Sigmoid colon (tissue), 7 donors: ENCODE measurements at regions of chr17 and their contacts with region 1.

Region 1: GRCh38 chr17:73657473-73658116 is 13.3 kb upstream of the SDK2 start:
- DNase-seq: no peak
- H3K4me3 ChIP-seq: no peak overlapping the region
- H3K27ac ChIP-seq: no peak overlapping the region
- H3K4me1 ChIP-seq: no peaks in the 10 kb centered on the region
- H3K27me3 ChIP-seq: peaks cover 0 to 3% (median 0%) of the 10 kb centered on the region in 3 donors
- CTCF ChIP-seq: peak in 3 of 4 experiments; percentile 28 to 37 (median 31)
- EP300 ChIP-seq: no peak
- POLR2A ChIP-seq: no peak

Region 2: GRCh38 chr17:73393962-73394361 is 263.6 kb before region 1 on chr17:
- intact Hi-C with region 1: no loop called
- DNase-seq: no peak
- H3K4me3 ChIP-seq: no peak overlapping the region
- H3K27ac ChIP-seq: no peak overlapping the region
- H3K4me1 ChIP-seq: no peaks in the 10 kb centered on the region
- H3K27me3 ChIP-seq: no peaks in the 10 kb centered on the region
- CTCF ChIP-seq: no peak
- EP300 ChIP-seq: no peak
- POLR2A ChIP-seq: no peak

Region 3: GRCh38 chr17:73710095-73710592 is 52.5 kb after region 1 on chr17:
- intact Hi-C with region 1: loop called (anchors 2 kb)
- DNase-seq: no peak
- H3K4me3 ChIP-seq: no peak overlapping the region
- H3K27ac ChIP-seq: no peak overlapping the region
- H3K4me1 ChIP-seq: peaks cover 0 to 4% (median 0%) of the 10 kb centered on the region in 4 donors
- H3K27me3 ChIP-seq: peaks cover 0 to 59% (median 25%) of the 10 kb centered on the region in 3 donors
- CTCF ChIP-seq: peak; percentile 13 to 63 (median 53)
- EP300 ChIP-seq: no peak
- POLR2A ChIP-seq: no peak

Region 4: DNA sequence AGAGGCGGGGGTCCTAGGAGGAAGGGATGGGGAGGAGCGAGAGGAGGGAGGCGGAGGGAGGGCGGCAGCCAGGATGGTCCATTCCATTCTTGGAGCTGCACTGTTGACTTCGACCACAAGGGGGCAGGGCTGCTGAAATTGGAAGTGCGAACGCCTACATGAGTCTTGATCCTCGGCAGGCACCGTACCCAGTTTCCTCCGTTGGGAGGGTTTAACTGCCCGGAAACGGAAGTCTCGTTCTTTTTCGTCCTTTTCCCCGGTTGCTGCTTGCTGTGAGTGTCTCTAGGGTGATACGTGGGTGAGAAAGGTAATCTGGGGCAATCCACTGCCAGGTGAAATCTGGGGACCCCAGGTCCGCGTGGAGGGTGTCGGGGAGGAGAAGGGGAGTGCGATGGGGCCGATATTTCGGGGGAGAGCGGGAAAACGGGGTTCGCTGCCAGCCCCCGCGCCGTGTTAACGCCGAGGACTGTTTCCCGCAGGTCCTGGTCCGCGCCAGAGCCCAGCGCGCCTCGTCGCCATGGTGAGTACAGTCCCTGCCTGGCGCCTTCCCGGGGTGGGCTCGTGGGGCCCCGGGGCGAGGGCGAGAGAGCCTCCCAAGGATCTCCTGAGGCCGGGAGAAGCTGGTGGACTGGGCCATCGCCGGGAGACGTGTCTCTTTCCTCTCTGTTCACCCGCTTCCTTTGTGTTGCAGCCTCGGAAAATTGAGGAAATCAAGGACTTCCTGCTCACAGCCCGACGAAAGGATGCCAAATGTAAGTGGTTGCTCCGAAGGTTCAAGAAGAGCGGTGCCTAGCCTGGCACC is 546.0 kb after region 1 on chr17 and contains the start of gene RPL38:
- intact Hi-C with region 1: no loop called
- DNase-seq: peak; percentile 98
- H3K4me3 ChIP-seq: peak within 1 kb of the TSS; percentile 56 to 77 (median 76)
- H3K27ac ChIP-seq: peak within 1 kb of the TSS; percentile 79 to 87 (median 82)
- H3K4me1 ChIP-seq: peaks cover 0 to 55% (median 44%) of the 10 kb centered on the region in 4 donors
- H3K27me3 ChIP-seq: peaks cover 11 to 26% (median 14%) of the 10 kb centered on the region in 3 donors
- CTCF ChIP-seq: peak; percentile 90 to 97 (median 96)
- EP300 ChIP-seq: peak in 2 of 4 donors; percentile 48 to 79
- POLR2A ChIP-seq: peak; percentile 92 to 93
- total RNA-seq, gene RPL38: 215 to 718 (median 492) TPM